Thyroid gland (tissue), 4 donors: ENCODE measurements at regions of chrX and their contacts with region 1.

Region 1: DNA sequence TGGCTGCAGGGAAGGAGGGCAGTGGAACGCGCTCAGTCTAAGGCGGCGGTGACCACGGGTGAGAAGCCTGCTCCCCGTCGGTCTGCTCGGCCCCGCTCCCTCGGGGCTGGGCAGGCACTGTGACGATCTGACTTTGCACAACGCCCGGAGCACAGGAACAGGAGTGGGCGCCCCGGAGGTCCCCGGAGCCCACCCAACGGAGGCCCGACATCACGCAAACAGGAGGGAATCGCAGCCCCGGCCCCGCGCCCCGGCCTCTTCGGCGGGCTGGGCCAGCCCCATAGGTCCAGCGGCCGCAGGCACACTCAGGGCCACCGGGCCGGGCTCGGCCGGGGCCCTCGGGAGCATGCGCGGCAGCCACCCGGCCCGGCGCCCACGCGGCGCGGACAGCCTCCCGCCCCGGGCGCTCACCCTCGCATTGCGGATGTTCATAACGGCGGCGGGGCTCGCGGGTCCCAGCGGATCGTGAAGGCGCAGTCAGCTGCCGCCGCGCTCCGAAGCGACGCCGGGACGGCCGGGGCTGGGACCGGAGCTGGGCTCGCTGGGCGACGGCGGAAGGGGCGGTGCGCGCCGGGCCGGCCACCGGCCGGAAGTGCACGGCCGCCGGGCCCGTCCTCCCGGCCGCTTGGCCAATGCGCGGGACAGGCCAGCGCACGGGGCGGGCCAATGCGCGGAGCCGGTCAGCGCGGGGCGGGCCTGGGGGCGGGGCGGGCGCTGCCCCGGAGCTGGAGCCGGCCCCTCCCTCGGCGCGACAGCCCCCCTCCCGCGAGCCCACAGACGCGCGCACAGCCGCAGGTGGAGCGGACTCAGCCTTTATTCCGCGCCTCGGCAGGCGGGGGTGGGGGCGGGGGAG is at the start of gene NAA10:
- DNase-seq: peak; percentile 66 to 76
- H3K4me3 ChIP-seq: peak within 1 kb of the TSS; percentile 17 to 51 (median 47)
- H3K27ac ChIP-seq: no peak within 1 kb of the TSS
- H3K4me1 ChIP-seq: peaks cover 0 to 11% of the 10 kb centered on the region in 2 donors
- H3K27me3 ChIP-seq: no peaks in the 10 kb centered on the region
- CTCF ChIP-seq: no peak
- POLR2A ChIP-seq: peak in 1 of 2 donors; percentile 53
- total RNA-seq, gene NAA10: 58.7 to 89.3 (median 69.7) TPM

Region 2: DNA sequence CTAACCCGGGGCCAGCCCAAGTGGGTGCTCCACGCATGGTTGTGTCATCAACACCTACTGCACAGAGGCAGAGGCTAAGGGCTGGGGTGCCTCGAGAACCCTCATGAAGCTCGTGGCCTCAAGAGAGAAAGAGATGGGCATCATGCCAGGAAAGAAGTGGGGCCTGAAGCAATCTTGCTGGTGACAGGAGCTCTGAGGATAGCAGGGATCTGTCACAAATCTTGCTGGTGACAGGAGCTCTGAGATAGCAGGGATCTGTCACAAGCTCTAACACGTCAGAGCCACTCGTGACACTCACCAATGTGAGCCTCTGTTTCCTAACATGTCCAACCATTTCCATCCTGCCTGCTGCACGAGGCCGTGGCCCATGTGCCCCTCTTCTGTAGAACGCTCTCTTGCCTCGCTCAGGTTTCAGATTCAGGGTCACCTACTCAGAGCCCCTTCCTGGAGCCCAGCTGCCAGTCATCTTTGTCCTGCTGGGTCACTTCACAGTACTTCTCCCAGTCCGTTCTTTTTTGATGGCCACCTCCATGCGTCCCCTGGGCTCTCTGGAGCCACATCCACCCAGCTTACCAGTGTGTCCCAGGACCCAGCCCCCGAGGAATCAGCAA is 554.6 kb before region 1 on chrX:
- intact Hi-C with region 1: no loop called
- DNase-seq: peak; percentile 41 to 63
- H3K4me3 ChIP-seq: no peak overlapping the region
- H3K27ac ChIP-seq: no peak overlapping the region
- H3K4me1 ChIP-seq: peaks cover 0 to 5% of the 10 kb centered on the region in 2 donors
- H3K27me3 ChIP-seq: no peaks in the 10 kb centered on the region
- CTCF ChIP-seq: no peak
- POLR2A ChIP-seq: no peak

Region 3: DNA sequence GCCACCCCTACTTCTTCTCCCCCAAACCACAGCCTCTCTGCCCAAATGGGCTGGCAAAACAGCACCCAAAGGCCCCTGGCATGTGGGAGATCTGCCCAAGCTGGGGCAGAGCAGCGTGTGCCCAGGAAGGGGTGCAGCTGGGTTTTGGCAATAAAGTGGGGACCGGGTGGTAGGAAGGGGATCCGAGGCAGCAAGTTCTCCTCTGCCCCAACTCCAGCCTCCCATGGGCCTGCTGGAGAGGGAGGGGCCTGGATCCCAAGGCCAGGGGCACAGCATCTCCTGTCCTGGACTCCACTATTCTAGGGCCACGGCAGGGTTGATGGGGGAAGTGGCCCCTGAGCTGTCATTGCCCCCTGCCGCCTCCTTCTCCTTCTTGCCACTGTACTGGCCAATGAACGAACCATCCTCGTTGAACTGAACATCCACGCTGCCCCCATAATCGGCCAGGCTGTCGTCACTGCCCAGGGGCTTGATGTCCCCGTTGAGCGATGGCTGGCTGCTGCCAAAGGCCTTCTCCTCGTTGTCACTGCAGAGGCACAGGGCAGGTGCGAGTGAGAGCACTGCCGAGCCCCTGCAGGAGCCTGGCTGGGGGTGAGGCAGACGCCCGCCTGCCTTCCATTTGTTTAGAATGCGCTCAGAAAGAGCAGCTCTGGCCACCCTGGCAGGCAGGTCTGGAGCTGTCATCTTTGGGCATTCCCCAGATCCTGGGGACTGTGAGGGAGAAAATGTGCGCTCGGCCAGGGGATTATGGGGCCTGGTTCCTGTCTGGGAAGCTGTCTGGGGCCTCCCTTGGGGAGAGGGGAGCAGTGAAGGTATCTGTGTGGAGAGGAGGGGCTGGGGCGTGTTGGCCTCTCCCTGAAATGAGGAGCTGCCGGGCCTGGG is 72.1 kb before region 1 on chrX:
- intact Hi-C with region 1: no loop called
- DNase-seq: no peak
- H3K4me3 ChIP-seq: no peak overlapping the region
- H3K27ac ChIP-seq: no peak overlapping the region
- H3K4me1 ChIP-seq: no peaks in the 10 kb centered on the region
- H3K27me3 ChIP-seq: no peaks in the 10 kb centered on the region
- CTCF ChIP-seq: no peak
- POLR2A ChIP-seq: no peak

Region 4: GRCh38 chrX:153875391-153876111 is 59.1 kb before region 1 on chrX:
- intact Hi-C with region 1: loop called (anchors 10 kb)
- DNase-seq: peak; percentile 44 to 49
- H3K4me3 ChIP-seq: no peak overlapping the region
- H3K27ac ChIP-seq: no peak overlapping the region
- H3K4me1 ChIP-seq: no peaks in the 10 kb centered on the region
- H3K27me3 ChIP-seq: no peaks in the 10 kb centered on the region
- CTCF ChIP-seq: no peak
- POLR2A ChIP-seq: no peak